Gastrocnemius medialis (tissue), 4 donors: ENCODE measurements at regions of chrX and their contacts with region 1.

Region 1: DNA sequence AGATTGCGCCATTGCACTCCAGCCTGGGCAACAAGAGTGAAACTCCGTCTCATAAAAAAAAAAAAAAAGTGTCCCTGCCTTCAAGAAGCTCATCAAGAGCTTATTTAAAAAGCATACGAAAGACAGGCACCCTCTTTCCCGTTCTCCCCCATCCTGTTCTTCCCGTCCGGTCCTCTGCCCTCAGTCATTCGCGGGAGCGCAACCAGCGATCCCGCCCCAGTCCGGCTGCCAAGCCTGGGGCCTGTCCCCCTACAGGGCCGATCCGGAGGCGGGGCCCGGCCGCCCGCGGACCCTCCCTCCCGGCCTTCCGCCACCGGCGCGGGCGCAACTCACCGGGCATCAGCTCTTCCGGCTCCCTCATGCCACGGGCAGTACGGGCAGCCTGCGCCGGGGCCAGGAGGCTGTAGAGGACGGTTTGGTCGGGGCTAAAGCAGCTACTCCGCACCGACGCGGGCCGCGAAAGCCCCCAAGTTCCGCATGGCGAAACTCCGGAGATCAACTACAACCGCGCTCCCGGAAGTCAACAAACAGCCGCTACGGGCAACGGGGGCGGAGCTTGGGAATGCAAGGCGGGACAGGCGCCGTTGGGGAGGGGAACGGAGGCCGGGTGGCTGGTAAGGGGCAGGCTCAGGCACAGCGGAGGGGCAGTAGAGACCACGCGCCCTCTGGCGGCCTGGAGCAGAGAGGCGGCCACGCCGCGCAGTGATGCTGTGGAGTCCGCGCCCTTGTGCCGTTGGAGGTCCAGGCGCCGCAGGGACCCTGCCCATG is at the start of gene RPGR:
- DNase-seq: peak; percentile 86 to 91
- ATAC-seq: peak; percentile 97
- H3K4me3 ChIP-seq: peak within 1 kb of the TSS; percentile 72 to 85 (median 78)
- H3K27ac ChIP-seq: peak within 1 kb of the TSS; percentile 85 to 93 (median 92)
- H3K4me1 ChIP-seq: no peaks in the 10 kb centered on the region
- H3K27me3 ChIP-seq: no peaks in the 10 kb centered on the region
- CTCF ChIP-seq: peak; percentile 52 to 88 (median 84)
- POLR2A ChIP-seq: peak; percentile 60 to 66
- total RNA-seq, gene RPGR: 10.5 to 28.7 (median 13.7) TPM

Region 2: GRCh38 chrX:37745354-37745753 is 581.8 kb before region 1 on chrX:
- in situ Hi-C with region 1: no loop called
- intact Hi-C with region 1: loop called (anchors 10 kb)
- DNase-seq: peak; percentile 5 to 34
- ATAC-seq: peak; percentile 60 to 68
- H3K4me3 ChIP-seq: no peak overlapping the region
- H3K27ac ChIP-seq: no peak overlapping the region
- H3K4me1 ChIP-seq: no peaks in the 10 kb centered on the region
- H3K27me3 ChIP-seq: no peaks in the 10 kb centered on the region
- CTCF ChIP-seq: peak; percentile 38 to 74 (median 52)
- POLR2A ChIP-seq: no peak

Region 3: DNA sequence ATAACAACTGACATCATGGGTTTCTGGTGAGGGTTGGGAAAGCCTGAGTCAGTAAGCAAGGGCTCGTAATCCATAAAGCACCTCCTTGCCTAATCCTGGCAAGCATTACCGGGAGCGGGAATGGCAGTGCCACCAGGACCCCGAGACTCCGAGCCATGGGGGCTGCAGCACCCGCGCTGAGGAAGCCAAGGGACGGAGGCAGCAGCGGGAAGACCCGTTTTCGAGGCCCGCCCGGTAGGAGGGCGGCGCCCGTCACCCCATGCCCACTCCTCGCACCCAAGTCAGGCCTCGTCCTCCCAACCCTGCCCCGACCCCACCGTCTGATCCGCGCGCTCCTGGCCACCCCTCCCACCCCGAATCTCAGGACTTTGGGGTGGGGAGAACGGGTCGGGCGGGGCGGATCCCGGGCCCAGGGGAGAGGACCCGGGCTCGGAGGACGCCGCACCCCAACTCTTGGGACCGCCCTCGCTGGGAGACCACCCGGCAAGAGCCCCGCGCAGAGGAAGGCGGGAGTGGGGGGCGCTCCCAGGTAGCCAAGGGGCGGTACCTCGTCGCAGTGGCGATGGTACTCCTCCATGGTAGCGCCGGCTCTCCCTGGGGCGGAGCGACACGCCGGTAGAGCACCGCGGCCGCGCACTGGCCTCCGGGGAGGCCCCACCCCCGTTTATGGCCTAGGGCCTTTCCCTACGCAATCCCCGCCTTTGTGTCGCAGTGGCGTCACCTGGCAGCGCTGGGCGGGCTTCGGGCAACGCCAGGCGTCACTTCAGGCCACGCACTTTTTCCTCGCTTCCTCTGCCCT is 480.1 kb before region 1 on chrX and contains the start of gene DYNLT3:
- in situ Hi-C with region 1: no loop called
- intact Hi-C with region 1: loop called (anchors 1 kb)
- DNase-seq: peak; percentile 58 to 76
- ATAC-seq: peak; percentile 94 to 95
- H3K4me3 ChIP-seq: peak within 1 kb of the TSS; percentile 67 to 88 (median 83)
- H3K27ac ChIP-seq: peak within 1 kb of the TSS; percentile 86 to 90 (median 88)
- H3K4me1 ChIP-seq: peaks cover 0 to 4% of the 10 kb centered on the region in 2 donors
- H3K27me3 ChIP-seq: no peaks in the 10 kb centered on the region
- CTCF ChIP-seq: no peak
- POLR2A ChIP-seq: peak; percentile 88 to 89
- total RNA-seq, gene DYNLT3: 12.7 to 22.2 (median 15.0) TPM

Region 4: DNA sequence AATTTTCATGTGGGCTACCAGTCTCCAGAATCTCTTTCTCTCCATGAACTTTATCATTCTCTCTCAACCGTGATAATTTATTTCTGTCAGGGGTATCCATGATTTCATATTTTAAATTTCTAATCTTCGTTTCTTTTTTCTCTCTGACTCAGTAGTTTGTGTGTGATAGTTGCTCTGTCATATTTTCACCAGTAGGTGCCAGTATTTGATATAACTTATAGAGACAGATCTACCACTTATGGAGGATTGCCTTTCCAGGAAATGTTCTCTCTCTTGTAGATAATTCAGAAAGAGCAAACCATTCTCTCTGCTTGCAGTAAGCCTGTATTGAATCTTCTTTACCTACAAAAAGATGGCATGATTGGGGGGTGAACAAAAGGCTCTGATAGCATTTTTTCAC is 400.5 kb before region 1 on chrX:
- in situ Hi-C with region 1: no loop called
- intact Hi-C with region 1: loop called (anchors 2 kb)
- DNase-seq: no peak
- ATAC-seq: no peak
- H3K4me3 ChIP-seq: no peak overlapping the region
- H3K27ac ChIP-seq: no peak overlapping the region
- H3K4me1 ChIP-seq: no peaks in the 10 kb centered on the region
- H3K27me3 ChIP-seq: no peaks in the 10 kb centered on the region
- CTCF ChIP-seq: peak in 2 of 5 experiments; percentile 20 to 35
- POLR2A ChIP-seq: no peak

Region 5: DNA sequence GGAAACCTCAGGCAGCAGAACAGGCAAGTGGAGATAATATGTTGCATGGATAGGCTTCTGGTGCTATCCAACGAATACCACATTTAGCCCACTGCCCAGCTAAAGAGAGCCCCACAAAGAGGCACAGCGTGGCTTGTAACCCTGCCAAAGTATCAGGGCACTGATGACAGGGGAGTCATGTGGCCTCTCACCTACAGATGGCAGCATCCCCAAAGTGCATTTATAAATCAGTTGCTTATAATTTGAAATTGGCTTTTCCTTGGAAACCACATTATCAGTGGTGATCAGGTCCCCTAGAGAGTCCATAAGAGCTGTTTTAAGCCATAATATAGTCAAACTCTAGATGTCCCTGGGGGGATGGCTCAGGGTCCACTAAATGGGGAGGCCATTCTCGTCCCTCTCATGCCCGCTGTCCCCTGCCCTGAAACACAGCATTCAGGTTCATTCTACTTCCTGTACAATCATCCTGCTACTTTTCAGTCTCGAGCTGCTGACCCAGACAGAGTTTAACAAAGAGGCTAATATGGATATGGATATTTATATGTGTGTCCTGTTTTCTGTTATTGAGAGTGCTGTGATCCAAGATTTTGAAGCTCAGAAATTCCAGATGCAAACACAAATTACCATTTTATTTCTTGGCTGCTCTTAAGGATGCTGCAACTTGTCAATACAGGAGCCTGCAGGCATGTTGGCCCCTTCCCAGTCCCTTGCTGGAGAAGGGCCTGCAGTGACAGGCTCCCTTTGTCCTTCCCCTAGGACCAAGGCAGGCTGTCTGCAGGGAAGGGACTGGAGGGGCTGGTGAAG is 135.0 kb before region 1 on chrX:
- in situ Hi-C with region 1: no loop called
- intact Hi-C with region 1: loop called (anchors 5 kb)
- DNase-seq: no peak
- ATAC-seq: no peak
- H3K4me3 ChIP-seq: no peak overlapping the region
- H3K27ac ChIP-seq: no peak overlapping the region
- H3K4me1 ChIP-seq: no peaks in the 10 kb centered on the region
- H3K27me3 ChIP-seq: peaks cover 0 to 2% (median 0%) of the 10 kb centered on the region in 3 donors
- CTCF ChIP-seq: peak in 2 of 5 experiments; percentile 19
- POLR2A ChIP-seq: no peak